ENCODE measurements at regions of chr19 and their contacts with region 1.

Region 1: GRCh38 chr19:35517342-35517741 is 3.9 kb upstream of the DMKN start:
- DNase-seq: no peak
- ATAC-seq: no peak
- H3K4me3 ChIP-seq: no peak overlapping the region
- H3K27ac ChIP-seq: no peak overlapping the region
- H3K4me1 ChIP-seq: peaks cover 12% of the 10 kb centered on the region
- H3K27me3 ChIP-seq: peaks cover 9% of the 10 kb centered on the region; the same call in 1 of the 2 replicates
- CTCF ChIP-seq: no peak
- POLR2A ChIP-seq: no peak
- RAD21 ChIP-seq: no peak

Region 2: GRCh38 chr19:35501684-35502083 is 15.7 kb before region 1 on chr19:
- CTCF ChIA-PET with region 1: no interaction called
- POLR2A ChIA-PET with region 1: interaction called, 11 read pairs
- dilution Hi-C with region 1: no loop called
- in situ Hi-C with region 1: no loop called
- intact Hi-C with region 1: no loop called
- DNase-seq: no peak
- ATAC-seq: no peak
- H3K4me3 ChIP-seq: no peak overlapping the region
- H3K27ac ChIP-seq: no peak overlapping the region
- H3K4me1 ChIP-seq: no peaks in the 10 kb centered on the region
- H3K27me3 ChIP-seq: peaks cover 43% of the 10 kb centered on the region
- CTCF ChIP-seq: no peak
- POLR2A ChIP-seq: no peak
- RAD21 ChIP-seq: no peak

Region 3: DNA sequence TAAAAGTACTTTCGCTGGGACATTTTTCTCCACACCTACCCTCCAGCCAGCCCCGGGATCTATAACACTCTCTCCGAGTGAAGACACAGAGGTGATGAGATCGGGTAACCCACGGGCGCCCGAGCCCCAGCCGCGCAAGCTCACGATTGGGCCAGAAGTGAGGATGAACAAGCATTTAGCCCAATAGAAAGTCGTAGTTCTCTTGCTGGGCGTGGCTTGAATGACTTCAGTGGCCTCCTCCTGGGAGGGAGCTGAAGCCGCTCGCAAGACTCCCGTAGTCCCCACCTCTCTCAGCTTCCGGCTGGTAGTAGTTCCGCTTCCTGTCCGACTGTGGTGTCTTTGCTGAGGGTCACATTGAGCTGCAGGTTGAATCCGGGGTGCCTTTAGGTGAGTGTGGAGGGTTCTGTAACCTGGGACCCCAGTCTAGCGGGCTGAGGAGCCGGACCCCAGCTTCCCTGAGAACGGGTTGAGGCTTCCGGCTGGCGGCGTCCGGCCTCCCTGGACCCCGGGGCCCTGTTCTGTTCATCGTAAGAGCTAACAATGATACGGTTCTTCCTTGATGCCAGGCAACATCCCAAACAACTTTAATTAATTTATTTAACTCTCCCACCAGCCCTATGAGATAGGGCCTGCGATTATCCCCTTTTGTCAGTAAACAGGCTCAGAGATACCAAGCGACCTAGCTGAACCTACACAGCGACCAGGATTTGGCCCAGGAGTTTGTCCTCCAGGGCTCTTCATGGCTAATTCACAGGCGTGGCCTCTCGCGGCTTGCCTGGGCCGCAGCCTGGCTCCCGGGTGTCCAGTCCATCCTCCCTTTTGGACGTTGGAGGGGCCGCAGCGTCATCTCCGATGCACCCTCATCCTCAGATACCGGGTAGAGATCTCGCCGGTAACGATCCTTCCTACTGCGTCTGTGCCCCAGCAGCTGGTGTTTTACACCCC is 130.9 kb after region 1 on chr19 and contains the start of gene COX6B1:
- CTCF ChIA-PET with region 1: no interaction called
- POLR2A ChIA-PET with region 1: no interaction called
- dilution Hi-C with region 1: no loop called
- in situ Hi-C with region 1: no loop called
- intact Hi-C with region 1: no loop called
- DNase-seq: peak; percentile 96
- ATAC-seq: peak; percentile 73
- H3K4me3 ChIP-seq: peak within 1 kb of the TSS; percentile 59
- H3K27ac ChIP-seq: peak within 1 kb of the TSS; percentile 55
- H3K4me1 ChIP-seq: peaks cover 5% of the 10 kb centered on the region
- H3K27me3 ChIP-seq: no peaks in the 10 kb centered on the region
- CTCF ChIP-seq: no peak
- POLR2A ChIP-seq: peak; percentile 60; the same call in 1 of the 2 replicates
- RAD21 ChIP-seq: no peak
- total RNA-seq, gene COX6B1: 913 and 983 TPM in 2 replicates

Region 4: DNA sequence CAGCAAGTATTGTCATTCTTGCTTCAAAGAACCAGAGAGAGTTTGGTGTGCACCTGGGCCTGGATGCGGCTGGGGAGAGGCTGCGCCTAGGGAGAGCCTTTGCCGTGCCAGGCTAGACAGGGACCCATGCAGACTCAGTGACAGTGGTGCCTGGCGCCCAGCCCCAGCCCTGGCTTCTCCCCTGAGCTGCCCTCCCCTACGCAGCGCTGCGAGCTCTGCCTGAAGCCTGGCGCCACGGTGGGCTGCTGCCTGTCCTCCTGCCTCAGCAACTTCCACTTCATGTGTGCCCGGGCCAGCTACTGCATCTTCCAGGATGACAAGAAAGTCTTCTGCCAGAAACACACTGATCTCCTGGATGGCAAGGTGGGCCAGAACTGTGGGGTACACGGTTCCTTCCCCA is 212.4 kb after region 1 on chr19:
- CTCF ChIA-PET with region 1: no interaction called
- POLR2A ChIA-PET with region 1: no interaction called
- dilution Hi-C with region 1: no loop called
- in situ Hi-C with region 1: no loop called
- intact Hi-C with region 1: no loop called
- DNase-seq: no peak
- ATAC-seq: no peak
- H3K4me3 ChIP-seq: no peak overlapping the region
- H3K27ac ChIP-seq: no peak overlapping the region
- H3K4me1 ChIP-seq: no peaks in the 10 kb centered on the region
- H3K27me3 ChIP-seq: no peaks in the 10 kb centered on the region
- CTCF ChIP-seq: no peak
- POLR2A ChIP-seq: no peak
- RAD21 ChIP-seq: no peak